Dendritic cell treated with granulocyte-macrophage colony-stimulating factor and Interleukin-4, amounts not matched to agents 40 ng/mL and 50 ng/mL, for 4 days (primary cell): ENCODE measurements at regions of chr6 and their contacts with region 1.

Region 1: GRCh38 chr6:108835218-108835850 is 12.9 kb upstream of the ARMC2 start:
- H3K4me3 Mint-ChIP-seq: no peak overlapping the region
- H3K27ac Mint-ChIP-seq: no peak overlapping the region
- H3K4me1 Mint-ChIP-seq: peaks cover 39% of the 10 kb centered on the region
- H3K27me3 Mint-ChIP-seq: peaks cover 59% of the 10 kb centered on the region

Region 2: GRCh38 chr6:108558372-108559096 is 276.8 kb before region 1 on chr6:
- intact Hi-C with region 1: loop called (anchors 5 kb)
- H3K4me3 Mint-ChIP-seq: peak overlapping the region; percentile 87
- H3K27ac Mint-ChIP-seq: peak overlapping the region; percentile 93
- H3K4me1 Mint-ChIP-seq: peaks cover 40% of the 10 kb centered on the region
- H3K27me3 Mint-ChIP-seq: peaks cover 14% of the 10 kb centered on the region

Region 3: GRCh38 chr6:108737594-108738546 is 97.5 kb before region 1 on chr6:
- intact Hi-C with region 1: loop called (anchors 10 kb)
- H3K4me3 Mint-ChIP-seq: no peak overlapping the region
- H3K27ac Mint-ChIP-seq: peak overlapping the region; percentile 30
- H3K4me1 Mint-ChIP-seq: peaks cover 54% of the 10 kb centered on the region
- H3K27me3 Mint-ChIP-seq: no peaks in the 10 kb centered on the region

Region 4: DNA sequence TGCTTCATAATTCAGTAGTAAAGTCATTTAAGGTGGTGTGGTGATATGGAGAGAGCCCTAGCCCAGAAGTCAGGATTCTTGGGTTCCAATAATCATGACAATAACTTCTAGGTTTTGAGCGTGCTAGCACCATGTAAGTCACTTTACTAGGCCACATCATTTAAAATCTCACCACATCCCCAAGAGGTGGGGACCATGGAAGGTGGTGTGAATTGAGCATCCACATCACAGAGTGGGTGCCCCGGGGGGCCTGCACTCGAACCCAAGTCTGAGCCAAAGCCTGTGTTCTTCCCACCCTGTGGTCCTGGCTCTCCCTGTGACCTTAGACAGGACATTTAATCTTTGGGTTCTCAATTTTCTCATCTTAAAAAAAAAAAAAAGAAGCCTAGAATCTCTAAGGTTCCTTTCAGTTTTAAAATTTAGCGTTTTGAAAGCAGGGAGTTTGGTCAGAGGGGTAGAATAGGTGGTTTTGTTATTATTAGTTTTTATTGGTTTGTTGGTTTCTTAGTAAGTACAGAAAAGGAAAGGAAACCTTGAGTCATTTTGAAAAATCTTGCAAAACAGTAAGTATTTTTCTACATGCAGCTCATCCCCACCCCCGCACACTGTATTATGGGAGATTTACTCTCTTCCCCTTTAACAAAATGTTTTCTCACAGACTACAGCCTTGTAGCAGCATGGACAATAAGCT is 39.3 kb after region 1 on chr6:
- intact Hi-C with region 1: loop called (anchors 5 kb)
- H3K4me3 Mint-ChIP-seq: peak overlapping the region; percentile 24
- H3K27ac Mint-ChIP-seq: peak overlapping the region; percentile 67
- H3K4me1 Mint-ChIP-seq: peaks cover 45% of the 10 kb centered on the region
- H3K27me3 Mint-ChIP-seq: peaks cover 40% of the 10 kb centered on the region

Region 5: GRCh38 chr6:109073344-109074132 is 238.2 kb after region 1 on chr6:
- intact Hi-C with region 1: loop called (anchors 2 kb)
- H3K4me3 Mint-ChIP-seq: no peak overlapping the region
- H3K27ac Mint-ChIP-seq: no peak overlapping the region
- H3K4me1 Mint-ChIP-seq: peaks cover 10% of the 10 kb centered on the region
- H3K27me3 Mint-ChIP-seq: no peaks in the 10 kb centered on the region